ENCODE measurements at regions of chr10 and their contacts with region 1.

Region 1: DNA sequence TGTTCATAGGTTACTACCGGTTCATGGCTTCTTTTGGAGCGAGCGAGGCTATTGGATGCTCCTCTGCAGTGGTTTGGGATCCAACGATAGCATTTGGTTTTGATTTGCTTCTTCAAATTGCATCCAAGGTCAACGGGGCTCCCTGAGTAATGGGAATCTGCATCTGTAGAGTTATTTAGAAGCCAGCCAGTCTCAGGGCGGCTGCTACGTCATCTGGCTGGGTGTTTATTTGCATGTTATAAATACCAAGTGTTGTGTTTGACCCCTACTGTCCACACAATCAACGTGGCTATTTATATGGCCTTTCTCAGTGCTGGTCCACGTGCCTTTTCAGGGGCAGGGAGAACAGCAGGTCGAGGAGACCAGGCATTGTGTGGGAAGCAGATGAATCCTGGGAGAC is 137.7 kb downstream of the PRPF18 start:
- DNase-seq: no peak
- ATAC-seq: peak; percentile 76 to 81

Region 2: DNA sequence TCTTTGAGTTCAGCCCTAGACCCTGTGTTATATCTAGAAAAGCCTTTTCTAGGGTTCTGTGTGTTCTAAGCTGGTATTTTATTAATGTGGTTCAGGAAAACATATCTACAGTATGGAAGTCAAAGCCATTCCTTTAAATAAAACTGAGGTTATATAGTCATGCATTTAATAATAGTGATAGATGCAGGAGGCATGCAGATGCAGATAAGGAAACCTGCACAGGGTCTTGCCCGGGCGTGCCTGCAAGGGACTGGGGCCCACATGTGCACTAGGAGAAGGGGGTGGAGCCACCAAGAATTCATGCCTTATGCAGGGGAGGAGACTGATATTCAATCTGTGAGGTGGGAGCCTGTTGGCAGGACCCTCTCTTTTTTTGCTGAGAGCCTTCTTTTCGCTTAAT is 33.8 kb after region 1 on chr10:
- intact Hi-C with region 1: loop called in 1 of 2 experiments (anchors 5 kb)
- DNase-seq: no peak
- ATAC-seq: no peak

Region 3: DNA sequence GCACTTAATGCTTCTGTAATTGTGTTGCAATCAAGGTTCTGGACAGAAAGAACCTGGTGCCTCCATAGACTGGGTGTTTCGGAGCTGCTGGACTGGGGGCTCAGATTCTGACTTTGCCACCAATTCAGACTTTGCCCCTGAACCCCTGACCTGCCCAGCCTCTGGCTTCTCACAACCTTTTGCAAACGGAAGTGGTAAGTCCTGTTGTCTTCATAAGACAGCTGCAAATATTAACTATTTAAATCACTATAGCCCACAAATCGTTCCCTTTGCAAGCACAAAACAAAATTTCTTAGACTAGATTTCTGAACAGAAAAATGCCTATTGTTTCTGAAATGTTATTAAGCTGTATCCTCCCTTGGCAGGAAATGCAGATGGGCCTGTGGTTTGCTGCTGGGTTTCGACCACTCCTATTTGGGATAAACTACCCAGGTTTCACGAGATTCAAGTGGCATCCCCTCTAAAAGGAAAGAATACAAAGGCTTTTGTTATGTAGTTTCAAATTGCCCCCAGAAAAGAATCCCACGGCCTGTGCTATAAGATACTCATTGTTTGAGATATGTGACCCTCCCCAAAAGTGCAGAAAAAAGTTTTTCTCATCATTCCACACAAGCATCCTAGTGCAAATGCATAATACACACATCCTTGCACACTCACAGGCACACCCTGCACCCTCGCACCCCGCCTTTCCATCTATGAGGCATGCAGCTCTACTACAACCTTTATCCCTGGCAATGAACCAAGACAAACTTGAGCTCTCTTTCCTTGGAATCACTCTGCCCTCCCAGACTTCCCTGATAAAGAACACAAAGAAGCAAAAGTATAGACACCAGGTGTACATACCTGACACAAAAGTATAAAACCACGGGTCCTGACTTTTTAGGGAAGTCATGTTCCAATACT is 71.4 kb after region 1 on chr10:
- intact Hi-C with region 1: no loop called
- DNase-seq: no peak
- ATAC-seq: no peak